Activated CD4-positive, alpha-beta T cell treated with anti-CD3 and anti-CD28 coated beads, Interleukin-2, amount 10 ng/mL, durations not matched to agents 24 days and 14 days (primary cell): ENCODE measurements at regions of chr10 and their contacts with region 1.

Region 1: DNA sequence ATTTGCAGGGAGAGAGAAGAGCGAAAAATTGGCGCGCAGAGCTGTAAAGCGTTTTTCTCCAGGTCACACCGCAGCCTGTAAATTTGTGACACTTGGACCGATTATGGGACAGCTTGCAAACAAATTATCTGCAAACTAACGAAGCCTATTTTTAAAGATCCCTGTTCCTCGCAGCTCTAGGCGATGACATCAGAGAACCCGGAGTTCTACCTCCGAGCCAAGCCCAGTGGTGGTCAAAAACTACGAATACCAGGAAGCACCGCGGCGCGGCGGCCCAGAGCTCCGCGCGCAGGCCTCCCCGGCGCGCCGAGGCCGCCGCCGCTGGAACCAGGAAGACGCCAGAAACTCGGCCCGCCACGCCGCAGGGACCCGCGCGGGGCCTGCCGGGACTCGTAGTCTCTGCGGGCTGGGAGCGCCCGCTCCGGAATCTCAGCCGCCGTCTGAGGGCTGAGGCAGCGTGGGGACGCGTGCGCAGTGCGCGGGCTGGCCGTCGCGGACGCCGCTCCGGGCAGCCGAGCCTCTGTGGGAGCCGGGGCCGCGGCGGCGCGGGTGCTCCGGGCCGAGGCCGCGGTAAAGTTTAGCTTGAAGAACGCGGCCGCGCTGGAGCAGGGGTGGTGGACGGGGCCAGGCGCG is at the start of gene PLEKHA1:
- DNase-seq: peak; percentile 98
- H3K4me3 Mint-ChIP-seq: peak within 1 kb of the TSS; percentile 87
- H3K27ac Mint-ChIP-seq: peak within 1 kb of the TSS; percentile 92
- H3K4me1 Mint-ChIP-seq: peaks cover 17% of the 10 kb centered on the region
- H3K27me3 Mint-ChIP-seq: peaks cover 64% of the 10 kb centered on the region
- total RNA-seq, gene PLEKHA1: 3.5 and 4.1 TPM in 2 replicates

Region 2: DNA sequence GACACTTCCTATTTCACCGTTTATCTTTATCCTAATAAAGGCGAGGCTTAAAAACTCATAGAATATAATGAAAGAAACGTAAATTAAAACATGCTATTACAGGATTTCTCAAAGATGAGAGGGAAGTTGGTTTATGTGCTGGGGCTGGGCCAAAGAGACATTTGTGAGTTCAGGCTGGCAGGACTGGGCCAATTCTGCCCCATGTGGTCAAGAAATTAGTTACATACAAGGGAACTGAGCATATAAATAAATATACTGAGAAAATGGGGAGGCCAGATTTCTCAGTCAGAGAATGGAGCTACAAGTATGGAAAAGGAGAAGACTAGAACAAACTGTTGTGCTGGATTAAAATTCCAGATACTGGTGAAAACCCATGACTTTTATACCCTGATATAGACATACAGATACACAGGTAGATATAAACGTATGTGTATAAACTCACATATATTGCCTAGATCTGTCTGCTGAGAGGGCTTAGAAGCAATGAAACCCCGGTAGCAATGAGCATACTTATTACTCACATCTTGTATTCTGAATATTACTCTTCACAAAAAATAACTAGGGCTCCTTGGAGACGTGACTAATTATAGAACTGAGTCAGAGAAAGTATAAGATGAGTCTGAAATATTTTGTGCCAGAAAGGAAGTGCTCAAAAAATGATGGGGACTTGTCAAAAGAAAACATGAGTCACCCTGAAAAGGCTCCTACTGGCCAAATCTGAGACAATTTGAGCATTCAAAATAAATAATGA is 620.5 kb before region 1 on chr10:
- intact Hi-C with region 1: loop called (anchors 10 kb)
- DNase-seq: no peak
- H3K4me3 Mint-ChIP-seq: no peak overlapping the region
- H3K27ac Mint-ChIP-seq: no peak overlapping the region
- H3K4me1 Mint-ChIP-seq: peaks cover 11% of the 10 kb centered on the region
- H3K27me3 Mint-ChIP-seq: peaks cover 3% of the 10 kb centered on the region

Region 3: GRCh38 chr10:122352817-122353525 is 21.4 kb before region 1 on chr10:
- intact Hi-C with region 1: no loop called
- DNase-seq: no peak
- H3K4me3 Mint-ChIP-seq: no peak overlapping the region
- H3K27ac Mint-ChIP-seq: no peak overlapping the region
- H3K4me1 Mint-ChIP-seq: no peaks in the 10 kb centered on the region
- H3K27me3 Mint-ChIP-seq: peaks cover 5% of the 10 kb centered on the region

Region 4: GRCh38 chr10:122407375-122408125 is 33.2 kb after region 1 on chr10:
- intact Hi-C with region 1: loop called (anchors 5 kb)
- DNase-seq: peak; percentile 68
- H3K4me3 Mint-ChIP-seq: peak overlapping the region; percentile 2
- H3K27ac Mint-ChIP-seq: no peak overlapping the region
- H3K4me1 Mint-ChIP-seq: peaks cover 12% of the 10 kb centered on the region
- H3K27me3 Mint-ChIP-seq: peaks cover 8% of the 10 kb centered on the region

Region 5: GRCh38 chr10:122879339-122880273 is 505.3 kb after region 1 on chr10 and contains the start of gene FAM24B:
- intact Hi-C with region 1: loop called (anchors 10 kb)
- DNase-seq: peak; percentile 98
- H3K4me3 Mint-ChIP-seq: peak within 1 kb of the TSS; percentile 98
- H3K27ac Mint-ChIP-seq: peak within 1 kb of the TSS; percentile 96
- H3K4me1 Mint-ChIP-seq: peaks cover 38% of the 10 kb centered on the region
- H3K27me3 Mint-ChIP-seq: no peaks in the 10 kb centered on the region
- total RNA-seq, gene FAM24B: 14.2 and 15.2 TPM in 2 replicates

Region 6: GRCh38 chr10:123154092-123154921 is 780.0 kb after region 1 on chr10 and contains the start of gene BUB3:
- intact Hi-C with region 1: loop called (anchors 1 kb)
- DNase-seq: peak; percentile 98
- H3K4me3 Mint-ChIP-seq: peak within 1 kb of the TSS; percentile 95
- H3K27ac Mint-ChIP-seq: peak within 1 kb of the TSS; percentile 100
- H3K4me1 Mint-ChIP-seq: peaks cover 54% of the 10 kb centered on the region
- H3K27me3 Mint-ChIP-seq: peaks cover 18% of the 10 kb centered on the region
- total RNA-seq, gene BUB3: 186 and 193 TPM in 2 replicates